IMR-90 (cell line): ENCODE measurements at regions of chr3 and their contacts with region 1.

Region 1: DNA sequence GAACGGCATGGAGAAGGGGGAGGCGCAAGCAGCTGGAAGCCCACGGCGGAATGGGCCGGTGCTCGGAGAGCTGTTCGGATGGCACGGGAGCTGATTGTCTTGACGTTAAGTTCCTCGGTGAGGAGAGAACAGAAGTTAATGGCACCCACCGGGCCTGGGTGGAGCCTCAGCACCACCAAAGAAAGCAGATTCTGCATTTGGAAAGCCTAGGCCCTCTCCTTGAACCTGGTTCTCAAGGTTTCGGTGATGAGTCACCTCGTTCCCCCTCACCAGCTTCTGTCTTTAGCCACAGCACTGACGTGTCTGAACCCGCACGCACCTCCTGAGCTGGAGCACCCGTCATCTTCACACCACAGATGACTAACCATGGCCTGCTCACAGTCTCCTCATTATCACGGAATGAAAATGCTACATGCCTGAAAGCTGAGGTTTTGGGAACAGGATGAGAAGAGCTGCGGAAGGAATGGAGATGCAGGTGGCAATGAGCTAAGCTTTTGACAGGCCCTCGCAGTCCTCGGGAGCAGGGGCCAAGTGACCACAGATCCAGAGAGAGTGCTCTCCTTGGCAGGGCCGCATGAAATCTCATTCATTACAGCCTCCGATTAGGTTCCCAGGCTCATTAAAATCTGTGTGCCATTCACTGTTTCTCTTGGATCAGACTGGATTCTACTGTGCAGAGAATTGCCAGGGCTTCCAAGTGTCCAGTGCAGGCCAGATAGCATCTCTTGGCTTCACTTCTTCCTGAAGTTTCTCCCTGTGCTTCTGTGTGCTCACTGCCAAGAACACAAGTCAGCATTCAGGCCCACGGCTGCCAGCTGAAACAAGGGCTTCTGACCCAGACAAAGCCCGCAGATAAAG is 96.3 kb upstream of the DLG1 start:
- DNase-seq: peak; percentile 99
- ATAC-seq: peak; percentile 92
- H3K4me3 ChIP-seq: no peak overlapping the region
- H3K27ac ChIP-seq: no peak overlapping the region
- H3K4me1 ChIP-seq: peaks cover 4% of the 10 kb centered on the region
- H3K27me3 ChIP-seq: peaks cover 42% of the 10 kb centered on the region
- CTCF ChIP-seq: no peak
- POLR2A ChIP-seq: peak; percentile 26; the same call in 1 of the 2 replicates
- RAD21 ChIP-seq: no peak

Region 2: DNA sequence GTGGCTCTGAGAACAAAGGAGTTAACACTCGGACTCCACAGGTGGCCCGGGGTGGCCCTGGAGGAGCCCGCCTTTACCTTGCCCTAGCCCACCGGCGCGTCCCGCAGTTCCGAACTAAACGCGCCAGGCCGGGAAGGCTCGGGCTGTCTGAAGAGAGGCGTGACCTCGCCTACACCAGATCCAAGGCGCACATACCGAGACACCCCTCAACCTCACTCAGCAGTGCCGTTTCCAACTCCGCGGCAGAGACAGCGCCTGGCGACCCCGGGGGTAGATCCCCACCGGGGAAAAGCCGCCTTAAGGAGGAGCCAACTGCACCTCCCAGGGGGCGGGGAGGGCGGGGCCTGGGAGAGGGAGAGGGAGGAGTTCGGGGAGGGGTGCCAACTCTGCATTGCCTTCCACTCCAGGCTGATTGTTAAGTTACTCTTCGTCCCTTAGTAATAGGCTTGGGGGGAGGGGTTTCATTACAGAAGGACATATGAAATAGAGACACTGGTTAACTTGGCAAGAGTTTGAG is 96.3 kb before region 1 on chr3 and contains the start of gene DLG1:
- CTCF ChIA-PET with region 1: no interaction called
- POLR2A ChIA-PET with region 1: no interaction called
- dilution Hi-C with region 1: no loop called
- in situ Hi-C with region 1: loop called (anchors 5 kb)
- intact Hi-C with region 1: no loop called
- DNase-seq: peak; percentile 92
- ATAC-seq: peak; percentile 84
- H3K4me3 ChIP-seq: peak within 1 kb of the TSS; percentile 98
- H3K27ac ChIP-seq: peak within 1 kb of the TSS; percentile 68
- H3K4me1 ChIP-seq: peaks cover 8% of the 10 kb centered on the region
- H3K27me3 ChIP-seq: no peaks in the 10 kb centered on the region
- CTCF ChIP-seq: no peak
- POLR2A ChIP-seq: peak; percentile 84
- RAD21 ChIP-seq: no peak
- total RNA-seq, gene DLG1: 57.7 and 58.6 TPM in 2 replicates

Region 3: GRCh38 chr3:197667978-197668377 is 273.3 kb after region 1 on chr3:
- CTCF ChIA-PET with region 1: no interaction called
- POLR2A ChIA-PET with region 1: no interaction called
- dilution Hi-C with region 1: no loop called
- in situ Hi-C with region 1: no loop called
- intact Hi-C with region 1: no loop called
- DNase-seq: no peak
- ATAC-seq: no peak
- H3K4me3 ChIP-seq: no peak overlapping the region
- H3K27ac ChIP-seq: no peak overlapping the region
- H3K4me1 ChIP-seq: no peaks in the 10 kb centered on the region
- H3K27me3 ChIP-seq: no peaks in the 10 kb centered on the region
- CTCF ChIP-seq: no peak
- POLR2A ChIP-seq: no peak
- RAD21 ChIP-seq: no peak